Activated naive CD8-positive, alpha-beta T cell treated with anti-CD3 and anti-CD28 coated beads, Interleukin-2, amount 10 ng/mL, durations not matched to agents 7 days and 5 days (primary cell): ENCODE measurements at regions of chr22 and their contacts with region 1.

Region 1: DNA sequence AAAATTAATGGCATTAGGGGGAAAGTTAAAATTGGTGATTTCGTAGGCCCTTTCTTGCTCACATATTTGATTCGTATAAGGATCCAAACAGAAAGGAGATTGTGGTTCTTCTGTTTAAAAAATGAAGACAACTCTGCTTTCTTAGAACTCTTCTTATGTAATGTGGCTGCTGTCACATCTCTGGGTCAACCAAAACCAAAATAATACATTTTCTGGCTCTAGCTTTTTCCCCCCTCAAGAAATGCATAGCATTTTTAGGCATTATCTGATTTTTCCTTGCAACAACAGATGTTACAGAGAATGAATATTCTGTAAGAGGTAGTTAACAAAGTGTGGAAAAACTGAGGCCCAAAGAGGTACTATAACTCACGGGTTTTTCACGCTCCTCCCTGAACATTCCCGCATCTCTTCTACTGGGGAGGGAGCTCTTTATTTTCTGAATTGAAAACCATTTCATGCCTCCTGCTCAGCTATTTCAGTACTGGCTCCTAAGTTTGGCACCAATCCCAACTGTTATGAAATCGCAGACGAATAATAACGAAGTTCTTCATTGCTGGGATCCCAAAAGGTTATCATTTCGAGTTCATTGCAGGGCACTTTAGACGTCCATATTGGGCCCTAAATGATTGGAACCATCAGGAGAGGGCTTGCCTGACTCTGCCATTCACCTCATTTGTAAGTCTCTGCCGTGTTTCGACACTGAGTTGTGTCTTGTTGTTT is 17.1 kb downstream of the GRAP2 start:
- DNase-seq: no peak
- ATAC-seq: no peak
- H3K4me3 Mint-ChIP-seq: peak overlapping the region; percentile 99
- H3K27ac Mint-ChIP-seq: peak overlapping the region; percentile 96
- H3K4me1 Mint-ChIP-seq: peaks cover 80% of the 10 kb centered on the region
- H3K27me3 Mint-ChIP-seq: no peaks in the 10 kb centered on the region

Region 2: DNA sequence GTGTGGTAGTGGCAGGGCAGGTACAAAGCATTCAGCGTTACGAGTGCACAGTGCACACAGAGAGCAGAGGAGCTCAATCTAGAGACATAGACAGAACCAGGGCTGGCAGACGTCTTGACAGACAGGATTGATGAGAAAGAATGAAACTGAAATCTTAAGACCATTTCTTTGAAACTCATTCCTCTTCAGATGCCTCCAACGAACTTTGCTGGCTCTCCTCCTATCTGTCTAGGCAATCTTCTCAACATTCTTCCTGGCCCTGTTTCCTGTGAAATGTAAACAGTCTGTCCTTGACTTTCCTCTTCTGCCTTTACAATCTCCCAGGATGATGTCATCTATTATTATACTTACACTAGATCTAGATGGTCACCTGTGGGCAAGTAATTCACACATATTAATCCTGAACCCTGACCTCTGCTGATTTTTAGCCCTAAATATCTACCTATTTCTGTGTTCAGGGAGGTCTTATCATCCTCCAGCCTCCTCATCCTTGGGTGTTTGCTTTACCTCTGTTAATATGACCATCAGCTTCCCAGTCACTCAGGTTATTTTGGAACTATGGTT is 143.9 kb before region 1 on chr22:
- POLR2A ChIA-PET with region 1: interaction called, 12 read pairs
- DNase-seq: peak; percentile 38
- ATAC-seq: peak; percentile 99
- H3K4me3 Mint-ChIP-seq: peak overlapping the region; percentile 40
- H3K27ac Mint-ChIP-seq: peak overlapping the region; percentile 87
- H3K4me1 Mint-ChIP-seq: peaks cover 24% of the 10 kb centered on the region
- H3K27me3 Mint-ChIP-seq: peaks cover 2% of the 10 kb centered on the region